ENCODE measurements at regions of chr6 and their contacts with region 1.

Region 1: DNA sequence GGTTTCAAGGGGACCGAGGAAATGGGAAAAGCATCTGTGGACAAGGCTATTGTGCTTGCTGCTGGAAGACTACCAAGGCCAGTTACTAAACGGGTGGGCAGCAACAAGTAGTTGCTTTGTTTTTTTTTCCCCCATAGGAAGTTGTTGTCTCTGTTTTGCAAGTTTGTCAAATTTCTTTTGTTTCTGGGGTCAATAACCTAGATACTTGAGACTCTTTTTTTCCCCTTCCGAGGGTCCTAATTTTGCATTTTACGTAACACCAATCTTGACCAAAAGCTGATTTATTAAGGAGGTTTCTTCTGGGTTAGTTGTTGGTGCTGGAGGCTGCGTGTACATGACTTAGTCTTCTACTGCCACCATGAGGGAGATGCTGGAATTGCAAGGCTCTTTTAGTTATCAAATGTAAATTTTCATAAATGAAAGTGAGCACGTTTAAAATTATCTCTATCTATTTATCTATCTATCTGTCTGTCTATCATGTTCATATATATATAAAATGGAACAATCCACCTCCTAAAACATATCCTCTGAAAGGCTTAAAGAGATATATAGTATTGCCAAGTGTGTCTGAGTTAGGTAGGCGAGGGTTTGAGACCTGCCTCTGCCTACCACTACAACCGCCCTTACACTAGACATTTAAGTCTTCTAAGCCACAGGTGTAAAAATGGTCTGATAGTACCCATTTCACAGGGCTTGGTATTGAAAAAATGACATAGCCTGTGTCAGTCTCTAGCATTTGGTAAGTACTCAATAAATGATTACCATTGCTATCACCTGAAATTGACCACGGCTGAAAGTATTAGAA is 60.2 kb downstream of the GCLC start:
- DNase-seq: peak; percentile 86
- H3K4me3 Mint-ChIP-seq: no peak overlapping the region
- H3K27ac Mint-ChIP-seq: no peak overlapping the region
- H3K4me1 Mint-ChIP-seq: peaks cover 2% of the 10 kb centered on the region
- H3K27me3 Mint-ChIP-seq: peaks cover 33% of the 10 kb centered on the region

Region 2: DNA sequence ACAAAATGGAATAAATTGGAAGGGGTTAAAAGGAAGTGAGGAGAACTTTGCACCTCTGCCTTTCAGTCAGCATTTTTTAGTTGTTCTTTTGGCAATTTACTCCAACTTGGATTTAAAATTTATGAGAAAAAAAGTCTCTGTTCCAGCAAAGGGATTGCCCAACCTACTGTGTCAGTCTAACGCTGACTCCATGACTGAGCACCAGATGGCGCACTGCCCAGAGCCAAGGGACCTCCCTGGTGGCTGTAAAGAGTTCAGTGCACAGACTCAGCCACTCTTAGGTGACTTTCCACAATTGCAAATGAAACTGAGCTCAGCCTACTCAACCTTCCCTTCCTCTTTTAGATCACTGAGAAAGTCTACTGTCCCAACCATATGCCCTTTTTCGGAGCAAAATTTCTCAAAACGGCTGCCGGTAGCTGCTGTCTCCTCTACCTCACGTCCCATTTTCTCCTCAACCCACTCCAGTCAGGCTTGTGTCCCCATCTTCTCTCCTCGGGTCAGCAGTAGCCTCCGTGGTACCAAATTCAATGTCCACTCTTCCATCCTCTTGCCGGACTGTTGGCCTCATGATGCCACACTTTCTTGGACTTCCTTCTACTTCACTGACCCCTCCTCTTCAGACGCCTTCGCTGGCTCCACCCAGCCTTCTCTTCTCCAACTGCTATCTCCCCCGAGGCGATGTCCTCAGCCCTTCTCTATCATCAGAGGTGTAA is 760.1 kb before region 1 on chr6:
- CTCF ChIA-PET with region 1: no interaction called
- intact Hi-C with region 1: loop called (anchors 1 kb)
- DNase-seq: peak; percentile 79
- H3K4me3 Mint-ChIP-seq: no peak overlapping the region
- H3K27ac Mint-ChIP-seq: no peak overlapping the region
- H3K4me1 Mint-ChIP-seq: no peaks in the 10 kb centered on the region
- H3K27me3 Mint-ChIP-seq: no peaks in the 10 kb centered on the region

Region 3: GRCh38 chr6:53103992-53104675 is 380.5 kb before region 1 on chr6:
- CTCF ChIA-PET with region 1: interaction called, 3 read pairs
- intact Hi-C with region 1: loop called (anchors 1 kb)
- DNase-seq: no peak
- H3K4me3 Mint-ChIP-seq: no peak overlapping the region
- H3K27ac Mint-ChIP-seq: no peak overlapping the region
- H3K4me1 Mint-ChIP-seq: no peaks in the 10 kb centered on the region
- H3K27me3 Mint-ChIP-seq: no peaks in the 10 kb centered on the region

Region 4: DNA sequence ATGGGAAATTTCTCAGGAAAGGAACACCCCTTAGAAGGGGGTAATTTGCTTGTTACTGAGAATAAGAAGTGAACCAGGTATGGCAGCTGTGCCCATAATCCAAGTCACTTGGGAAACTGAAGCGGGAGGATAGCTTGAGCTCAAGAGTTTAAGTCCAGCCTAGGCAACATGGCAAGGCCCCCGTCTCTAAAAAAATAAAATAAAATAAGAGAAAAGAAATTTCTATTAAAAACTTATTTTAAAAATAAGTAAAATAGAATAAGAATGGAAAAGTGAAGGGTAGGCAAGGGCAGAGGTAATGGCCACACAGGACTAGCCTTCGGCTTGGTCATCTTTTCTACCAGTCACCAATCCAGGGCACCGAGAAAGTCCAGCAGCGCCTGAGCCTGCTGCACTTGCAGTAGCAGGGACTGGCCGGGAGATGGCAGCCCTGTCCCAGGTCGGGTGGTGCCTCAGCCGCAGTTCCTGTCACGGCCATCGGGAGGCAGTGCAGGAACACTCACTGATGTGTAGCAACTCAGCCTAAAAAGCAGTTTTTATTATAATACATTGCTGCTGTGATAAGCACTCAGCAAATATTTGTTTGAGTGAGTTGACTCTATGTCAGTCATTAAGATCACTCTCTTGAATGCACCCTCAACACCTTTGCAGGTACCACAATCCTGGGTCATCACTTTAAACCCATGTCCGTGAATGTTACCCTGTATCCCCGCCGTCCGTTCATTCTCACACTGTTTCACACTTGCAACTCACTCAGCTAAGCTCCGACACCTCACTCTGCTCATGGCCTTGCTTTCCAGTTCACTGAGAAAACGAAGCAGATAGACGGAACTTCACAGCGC is 312.9 kb before region 1 on chr6:
- CTCF ChIA-PET with region 1: interaction called, 89 read pairs
- intact Hi-C with region 1: loop called (anchors 1 kb)
- DNase-seq: peak; percentile 93
- H3K4me3 Mint-ChIP-seq: no peak overlapping the region
- H3K27ac Mint-ChIP-seq: no peak overlapping the region
- H3K4me1 Mint-ChIP-seq: no peaks in the 10 kb centered on the region
- H3K27me3 Mint-ChIP-seq: no peaks in the 10 kb centered on the region

Region 5: DNA sequence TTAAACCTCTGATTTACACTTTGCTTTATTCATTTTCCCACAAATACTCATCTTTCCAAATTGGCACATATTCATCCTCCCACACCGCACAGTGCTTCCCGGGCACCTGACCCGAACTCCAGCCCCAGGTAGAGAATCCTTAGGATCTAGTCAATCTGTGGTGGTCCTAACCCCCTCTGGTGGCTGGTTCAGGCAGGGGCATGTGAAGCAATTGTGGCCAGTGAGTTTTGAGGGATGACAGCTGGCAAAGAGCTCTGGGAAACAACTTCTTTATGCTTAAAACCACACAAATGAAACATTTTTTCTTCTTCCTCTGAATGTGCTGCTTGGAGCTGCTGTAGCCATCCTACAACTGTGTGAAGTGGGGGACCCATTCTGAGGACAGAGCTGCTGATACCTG is 190.6 kb before region 1 on chr6:
- CTCF ChIA-PET with region 1: interaction called, 4 read pairs
- intact Hi-C with region 1: loop called (anchors 5 kb)
- DNase-seq: no peak
- H3K4me3 Mint-ChIP-seq: no peak overlapping the region
- H3K27ac Mint-ChIP-seq: no peak overlapping the region
- H3K4me1 Mint-ChIP-seq: peaks cover 65% of the 10 kb centered on the region
- H3K27me3 Mint-ChIP-seq: no peaks in the 10 kb centered on the region

Region 6: DNA sequence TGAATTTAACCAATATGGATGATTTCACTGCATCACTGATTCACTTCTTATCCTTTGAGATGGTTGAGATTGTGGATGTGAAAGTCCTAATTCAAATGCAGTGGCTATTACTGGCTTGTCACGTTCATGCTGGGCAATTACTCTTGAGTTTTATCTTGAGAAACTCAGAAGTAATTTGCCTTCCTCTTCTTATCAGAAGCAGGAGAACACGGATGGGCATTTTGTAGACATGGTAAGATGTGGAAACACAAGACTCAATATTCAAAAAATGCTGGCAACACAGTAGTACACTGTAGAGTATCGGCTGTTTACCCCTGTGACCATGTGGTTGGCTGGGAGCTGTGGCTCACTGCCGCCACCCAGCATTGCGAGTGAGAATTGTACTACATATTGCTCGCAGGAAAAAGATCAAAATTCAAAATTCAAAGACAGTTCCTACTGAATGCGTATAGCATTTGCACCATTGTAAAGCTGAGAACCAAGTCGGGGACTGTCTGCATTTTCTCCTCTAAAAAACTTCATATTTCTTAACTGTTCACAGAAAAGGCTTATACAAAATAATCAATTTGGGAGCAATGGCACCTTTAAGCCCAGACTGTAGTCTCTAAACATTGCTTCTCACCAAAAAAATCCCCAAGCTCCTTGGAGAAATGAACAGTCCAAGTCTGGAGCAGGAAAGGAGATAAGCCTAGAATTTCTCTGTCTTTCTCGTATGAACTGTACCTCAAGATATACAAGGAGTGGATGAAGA is 74.0 kb before region 1 on chr6:
- CTCF ChIA-PET with region 1: interaction called, 3 read pairs
- intact Hi-C with region 1: loop called (anchors 1 kb)
- DNase-seq: peak; percentile 70
- H3K4me3 Mint-ChIP-seq: no peak overlapping the region
- H3K27ac Mint-ChIP-seq: no peak overlapping the region
- H3K4me1 Mint-ChIP-seq: no peaks in the 10 kb centered on the region
- H3K27me3 Mint-ChIP-seq: no peaks in the 10 kb centered on the region

Region 7: GRCh38 chr6:53437557-53438202 is 47.0 kb before region 1 on chr6:
- CTCF ChIA-PET with region 1: interaction called, 9 read pairs
- intact Hi-C with region 1: loop called (anchors 1 kb)
- DNase-seq: peak; percentile 48
- H3K4me3 Mint-ChIP-seq: no peak overlapping the region
- H3K27ac Mint-ChIP-seq: no peak overlapping the region
- H3K4me1 Mint-ChIP-seq: peaks cover 21% of the 10 kb centered on the region
- H3K27me3 Mint-ChIP-seq: peaks cover 3% of the 10 kb centered on the region